GM23248 (cell line): ENCODE measurements at regions of chr16 and their contacts with region 1.

Region 1: DNA sequence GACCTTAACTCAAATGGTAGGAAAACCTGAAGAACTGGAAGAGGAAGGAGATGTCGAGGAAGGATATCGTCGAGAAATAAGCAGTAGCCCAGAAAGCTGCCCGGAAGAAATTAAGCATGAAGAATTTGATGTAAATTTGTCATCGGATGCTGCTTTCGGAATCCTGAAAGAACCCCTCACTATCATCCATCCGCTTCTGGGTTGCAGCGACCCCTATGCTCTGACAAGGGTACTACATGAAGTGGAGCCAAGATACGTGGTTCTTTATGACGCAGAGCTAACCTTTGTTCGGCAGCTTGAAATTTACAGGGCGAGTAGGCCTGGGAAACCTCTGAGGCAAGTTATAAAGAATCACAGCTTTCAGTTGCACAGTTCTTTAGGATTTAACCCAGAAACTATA is 15.5 kb downstream of the ERCC4 start:
- DNase-seq: no peak
- H3K4me3 ChIP-seq: no peak overlapping the region
- H3K27ac ChIP-seq: no peak overlapping the region
- H3K4me1 ChIP-seq: peaks cover 10% of the 10 kb centered on the region
- H3K27me3 ChIP-seq: no peaks in the 10 kb centered on the region

Region 2: GRCh38 chr16:14202697-14203096 is 267.3 kb after region 1 on chr16:
- in situ Hi-C with region 1: loop called (anchors 25 kb)
- DNase-seq: peak; percentile 13
- H3K4me3 ChIP-seq: no peak overlapping the region
- H3K27ac ChIP-seq: no peak overlapping the region
- H3K4me1 ChIP-seq: peaks cover 8% of the 10 kb centered on the region
- H3K27me3 ChIP-seq: no peaks in the 10 kb centered on the region

Region 3: GRCh38 chr16:14378131-14378551 is 442.7 kb after region 1 on chr16:
- in situ Hi-C with region 1: no loop called
- DNase-seq: peak; percentile 76
- H3K4me3 ChIP-seq: no peak overlapping the region
- H3K27ac ChIP-seq: peak overlapping the region; percentile 65
- H3K4me1 ChIP-seq: peaks cover 22% of the 10 kb centered on the region
- H3K27me3 ChIP-seq: no peaks in the 10 kb centered on the region

Region 4: GRCh38 chr16:14436401-14436955 is 501.1 kb after region 1 on chr16:
- in situ Hi-C with region 1: loop called (anchors 25 kb)
- DNase-seq: no peak
- H3K4me3 ChIP-seq: no peak overlapping the region
- H3K27ac ChIP-seq: no peak overlapping the region
- H3K4me1 ChIP-seq: no peaks in the 10 kb centered on the region
- H3K27me3 ChIP-seq: no peaks in the 10 kb centered on the region

Region 5: DNA sequence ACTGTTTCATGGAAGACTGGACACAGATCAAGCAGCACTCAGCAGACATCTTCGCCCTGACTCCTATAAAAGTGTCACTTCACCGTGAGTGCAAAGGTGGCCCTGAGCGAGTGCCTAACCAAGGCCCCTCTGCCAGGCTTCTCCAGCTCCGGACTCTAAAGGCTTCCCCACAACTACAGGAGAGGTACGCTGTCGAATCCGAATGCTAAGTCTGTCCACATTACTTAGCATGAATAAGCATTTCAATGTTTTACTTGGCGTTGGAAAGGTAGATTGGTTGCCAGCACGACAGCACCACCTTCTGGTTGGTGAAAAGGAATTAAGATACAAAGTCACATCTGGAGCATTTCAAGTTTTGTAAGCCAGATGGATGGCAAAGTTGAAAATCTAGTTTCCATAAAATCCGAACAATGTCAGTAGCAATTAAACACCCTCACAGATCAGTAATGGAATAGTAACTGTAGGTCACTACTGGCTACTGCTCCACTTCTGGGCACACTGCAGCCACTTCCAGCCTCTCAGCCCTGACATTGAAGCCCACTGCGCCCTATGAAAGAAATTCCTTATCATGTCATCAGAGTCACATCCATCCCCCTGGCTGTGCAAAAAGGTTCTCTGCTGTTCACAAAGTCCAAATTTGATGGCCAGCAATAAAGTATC is 593.7 kb after region 1 on chr16:
- in situ Hi-C with region 1: loop called (anchors 25 kb)
- DNase-seq: peak; percentile 92
- H3K4me3 ChIP-seq: peak overlapping the region; percentile 67
- H3K27ac ChIP-seq: peak overlapping the region; percentile 77
- H3K4me1 ChIP-seq: peaks cover 25% of the 10 kb centered on the region
- H3K27me3 ChIP-seq: no peaks in the 10 kb centered on the region